ENCODE measurements at regions of chr12 and their contacts with region 1.

Region 1: GRCh38 chr12:121461048-121461447 is 61.1 kb downstream of the RNF34 start:
- DNase-seq: no peak
- ATAC-seq: no peak
- H3K4me3 ChIP-seq: no peak overlapping the region
- H3K4me3 Mint-ChIP-seq: no peak overlapping the region
- H3K27ac ChIP-seq: no peak overlapping the region
- H3K27ac Mint-ChIP-seq: peak overlapping the region; percentile 42
- H3K4me1 ChIP-seq: peaks cover 20 to 47% of the 10 kb centered on the region in 2 donors
- H3K4me1 Mint-ChIP-seq: peaks cover 55% of the 10 kb centered on the region
- H3K27me3 ChIP-seq: no peaks in the 10 kb centered on the region
- H3K27me3 Mint-ChIP-seq: no peaks in the 10 kb centered on the region
- CTCF ChIP-seq: no peak

Region 2: GRCh38 chr12:121443193-121443870 is 17.7 kb before region 1 on chr12:
- CTCF ChIA-PET with region 1: interaction called, 14 read pairs
- POLR2A ChIA-PET with region 1: interaction called, 4 read pairs
- intact Hi-C with region 1: no loop called
- DNase-seq: peak; percentile 70
- ATAC-seq: peak; percentile 66
- H3K4me3 ChIP-seq: no peak overlapping the region
- H3K4me3 Mint-ChIP-seq: no peak overlapping the region
- H3K27ac ChIP-seq: no peak overlapping the region
- H3K27ac Mint-ChIP-seq: no peak overlapping the region
- H3K4me1 ChIP-seq: no peaks in the 10 kb centered on the region
- H3K4me1 Mint-ChIP-seq: peaks cover 5% of the 10 kb centered on the region
- H3K27me3 ChIP-seq: no peaks in the 10 kb centered on the region
- H3K27me3 Mint-ChIP-seq: no peaks in the 10 kb centered on the region
- CTCF ChIP-seq: peak; percentile 84

Region 3: DNA sequence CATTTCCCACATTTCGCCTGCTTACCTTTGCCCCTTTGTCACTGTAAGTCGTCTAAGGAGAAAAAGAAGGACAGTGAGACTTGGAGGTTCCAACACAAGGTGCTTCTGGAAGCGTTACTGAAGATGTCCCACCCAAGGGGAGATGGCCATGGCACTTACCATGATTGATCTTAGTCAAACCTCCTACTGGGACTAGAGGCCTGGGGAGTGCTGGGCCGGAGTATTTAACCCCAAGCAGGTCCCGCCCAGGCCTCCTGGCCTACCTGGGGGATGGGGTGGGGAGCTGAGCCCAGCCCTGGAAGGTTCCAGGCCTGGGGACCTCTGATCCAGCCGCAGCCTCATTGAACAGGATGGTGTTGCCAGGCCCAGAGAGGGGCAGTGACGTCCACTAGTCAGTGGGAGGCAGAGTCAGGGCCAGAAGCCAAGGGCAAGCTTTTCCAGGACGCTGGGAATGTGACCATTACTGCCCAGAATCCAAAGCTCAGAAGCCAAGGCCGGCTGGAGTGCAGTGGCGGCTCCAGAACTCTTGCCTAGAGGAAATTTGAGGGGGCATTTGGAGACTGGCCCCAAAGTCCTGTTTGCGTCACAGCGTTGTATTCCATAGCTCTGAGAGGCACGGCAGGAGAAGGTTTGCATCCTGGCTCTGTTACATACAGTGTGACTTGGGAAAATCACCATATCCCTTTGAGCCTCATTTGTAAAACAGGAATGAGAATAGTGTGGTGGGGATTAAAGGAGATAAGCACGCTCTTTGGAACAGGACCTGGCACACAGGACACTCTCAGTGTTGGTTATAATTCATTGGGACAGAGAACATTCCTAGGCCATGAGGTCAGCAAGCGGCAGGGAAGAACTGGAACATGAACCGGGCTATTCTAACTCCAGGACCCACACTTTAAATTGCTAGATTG is 397.9 kb after region 1 on chr12 and contains the start of gene HPD:
- CTCF ChIA-PET with region 1: no interaction called
- POLR2A ChIA-PET with region 1: no interaction called
- intact Hi-C with region 1: no loop called
- DNase-seq: no peak
- ATAC-seq: no peak
- H3K4me3 ChIP-seq: no peak within 1 kb of the TSS
- H3K4me3 Mint-ChIP-seq: no peak within 1 kb of the TSS
- H3K27ac ChIP-seq: no peak within 1 kb of the TSS
- H3K27ac Mint-ChIP-seq: no peak within 1 kb of the TSS
- H3K4me1 ChIP-seq: peaks cover 6 to 25% of the 10 kb centered on the region in 2 donors
- H3K4me1 Mint-ChIP-seq: peaks cover 11% of the 10 kb centered on the region
- H3K27me3 ChIP-seq: no peaks in the 10 kb centered on the region
- H3K27me3 Mint-ChIP-seq: no peaks in the 10 kb centered on the region
- CTCF ChIP-seq: no peak
- total RNA-seq, gene HPD: not detected in 2 replicates

Measured in B cell (primary cell).